Activated naive CD4-positive, alpha-beta T cell treated with anti-CD3 and anti-CD28 coated beads for 36 hours (primary cell): ENCODE measurements at regions of chr2 and their contacts with region 1.

Region 1: GRCh38 chr2:73939419-73939818 is 12.7 kb downstream of the DGUOK start:
- DNase-seq: peak; percentile 76
- H3K4me3 Mint-ChIP-seq: no peak overlapping the region
- H3K27ac Mint-ChIP-seq: peak overlapping the region; percentile 76
- H3K4me1 Mint-ChIP-seq: peaks cover 84% of the 10 kb centered on the region
- H3K27me3 Mint-ChIP-seq: no peaks in the 10 kb centered on the region

Region 2: GRCh38 chr2:73359915-73360697 is 579.3 kb before region 1 on chr2:
- CTCF ChIA-PET with region 1: no interaction called
- intact Hi-C with region 1: no loop called
- DNase-seq: no peak
- H3K4me3 Mint-ChIP-seq: no peak overlapping the region
- H3K27ac Mint-ChIP-seq: no peak overlapping the region
- H3K4me1 Mint-ChIP-seq: no peaks in the 10 kb centered on the region
- H3K27me3 Mint-ChIP-seq: no peaks in the 10 kb centered on the region

Region 3: DNA sequence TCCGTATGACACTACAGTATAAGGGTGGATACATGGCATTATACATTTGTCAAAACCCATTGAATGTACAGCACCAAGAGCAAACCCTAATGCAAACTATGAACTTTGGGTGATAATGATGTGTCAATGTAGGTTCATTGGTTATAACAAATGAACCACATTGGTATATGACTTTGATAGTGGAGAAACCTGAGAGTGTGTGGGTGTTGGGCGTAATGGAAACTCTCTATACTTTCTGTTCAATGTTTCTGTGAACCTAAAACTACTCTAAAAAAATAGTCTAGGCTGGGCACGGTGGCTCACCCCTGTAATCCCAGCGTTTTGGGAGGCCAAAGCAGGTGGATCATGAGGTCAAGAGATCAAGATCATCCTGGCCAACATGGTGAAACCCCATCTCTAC is 53.1 kb before region 1 on chr2:
- CTCF ChIA-PET with region 1: no interaction called
- intact Hi-C with region 1: loop called (anchors 1 kb)
- DNase-seq: peak; percentile 73
- H3K4me3 Mint-ChIP-seq: no peak overlapping the region
- H3K27ac Mint-ChIP-seq: peak overlapping the region; percentile 54
- H3K4me1 Mint-ChIP-seq: peaks cover 24% of the 10 kb centered on the region
- H3K27me3 Mint-ChIP-seq: no peaks in the 10 kb centered on the region

Region 4: DNA sequence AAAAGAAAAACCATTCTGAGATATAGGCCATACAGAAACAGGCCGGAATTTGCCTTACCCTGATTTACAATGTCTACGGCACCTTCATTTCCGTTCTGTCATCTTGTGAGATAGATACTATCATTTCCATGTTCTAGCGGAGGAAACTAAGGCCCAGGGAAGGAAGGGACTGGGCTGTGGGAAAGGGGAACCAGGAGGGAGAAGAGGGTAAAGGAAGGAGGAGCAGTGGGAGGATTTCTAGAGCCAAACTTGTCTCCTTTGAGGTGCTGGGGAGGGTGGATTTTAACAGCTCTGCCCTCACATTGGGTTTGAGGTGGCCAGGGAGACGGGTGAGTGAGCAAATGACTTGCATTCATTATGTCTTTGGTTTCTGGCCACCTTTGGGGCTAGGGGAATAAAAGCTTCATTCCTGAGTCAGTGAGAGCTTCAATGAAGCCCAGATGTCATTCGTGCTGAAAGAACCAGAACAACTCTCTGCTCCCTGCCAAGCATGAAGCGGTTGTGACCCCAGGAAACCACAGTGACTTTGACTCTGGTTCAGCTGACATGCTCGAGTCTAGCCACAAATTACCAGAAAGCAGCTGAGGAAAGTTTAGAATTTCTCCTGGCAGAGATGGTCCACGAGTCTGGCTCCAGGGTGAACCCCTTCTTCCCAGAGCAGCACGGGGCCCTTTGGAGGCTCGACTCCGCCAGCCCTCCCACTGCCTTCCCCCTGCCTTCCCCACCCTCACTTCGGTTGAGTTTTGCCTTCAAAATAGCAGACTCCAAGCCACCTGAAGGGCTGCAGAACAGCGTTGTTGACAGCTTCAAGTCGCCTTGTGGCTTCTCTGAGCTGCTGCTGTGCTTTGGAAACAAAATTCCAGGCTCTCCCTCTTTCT is 42.8 kb before region 1 on chr2:
- CTCF ChIA-PET with region 1: interaction called, 3 read pairs
- intact Hi-C with region 1: loop called (anchors 1 kb)
- DNase-seq: peak; percentile 72
- H3K4me3 Mint-ChIP-seq: peak overlapping the region; percentile 8
- H3K27ac Mint-ChIP-seq: peak overlapping the region; percentile 65
- H3K4me1 Mint-ChIP-seq: peaks cover 33% of the 10 kb centered on the region
- H3K27me3 Mint-ChIP-seq: no peaks in the 10 kb centered on the region

Region 5: DNA sequence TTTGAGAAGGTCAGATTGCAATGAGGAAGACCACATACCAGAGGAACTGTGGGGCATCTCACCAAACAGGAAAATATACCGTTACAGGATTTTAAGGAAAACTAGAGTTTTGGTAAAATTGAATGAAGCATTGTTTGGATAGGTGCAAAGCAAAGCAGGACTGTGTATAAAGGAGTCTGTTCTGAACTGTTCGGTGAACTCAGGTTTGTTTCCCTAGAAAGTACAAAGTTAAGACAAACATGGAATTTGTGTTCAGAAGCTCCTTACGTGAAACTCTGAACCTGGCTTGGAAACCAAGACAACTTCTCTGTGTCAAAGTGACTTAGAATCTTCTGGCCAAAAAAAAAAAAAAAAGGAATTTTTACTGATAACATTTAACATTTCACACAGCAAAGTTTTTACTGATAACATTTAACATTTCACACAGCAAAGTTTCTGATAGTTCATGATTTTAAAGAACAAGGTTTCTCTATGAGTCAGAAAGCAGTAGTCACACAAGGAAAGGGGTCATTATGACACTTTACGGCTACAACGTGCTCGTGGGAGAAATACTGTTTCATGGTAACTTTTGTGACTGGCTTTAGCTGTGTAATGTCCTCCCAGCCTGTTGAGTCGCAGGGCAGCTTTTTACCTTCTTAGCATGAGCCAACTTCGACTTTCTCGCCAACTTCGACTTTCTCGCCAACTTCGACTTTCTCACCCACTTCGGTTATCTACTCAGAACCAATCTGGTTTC is 24.1 kb after region 1 on chr2:
- CTCF ChIA-PET with region 1: interaction called, 3 read pairs
- intact Hi-C with region 1: loop called (anchors 1 kb)
- DNase-seq: peak; percentile 70
- H3K4me3 Mint-ChIP-seq: peak overlapping the region; percentile 38
- H3K27ac Mint-ChIP-seq: peak overlapping the region; percentile 69
- H3K4me1 Mint-ChIP-seq: peaks cover 39% of the 10 kb centered on the region
- H3K27me3 Mint-ChIP-seq: no peaks in the 10 kb centered on the region

Region 6: DNA sequence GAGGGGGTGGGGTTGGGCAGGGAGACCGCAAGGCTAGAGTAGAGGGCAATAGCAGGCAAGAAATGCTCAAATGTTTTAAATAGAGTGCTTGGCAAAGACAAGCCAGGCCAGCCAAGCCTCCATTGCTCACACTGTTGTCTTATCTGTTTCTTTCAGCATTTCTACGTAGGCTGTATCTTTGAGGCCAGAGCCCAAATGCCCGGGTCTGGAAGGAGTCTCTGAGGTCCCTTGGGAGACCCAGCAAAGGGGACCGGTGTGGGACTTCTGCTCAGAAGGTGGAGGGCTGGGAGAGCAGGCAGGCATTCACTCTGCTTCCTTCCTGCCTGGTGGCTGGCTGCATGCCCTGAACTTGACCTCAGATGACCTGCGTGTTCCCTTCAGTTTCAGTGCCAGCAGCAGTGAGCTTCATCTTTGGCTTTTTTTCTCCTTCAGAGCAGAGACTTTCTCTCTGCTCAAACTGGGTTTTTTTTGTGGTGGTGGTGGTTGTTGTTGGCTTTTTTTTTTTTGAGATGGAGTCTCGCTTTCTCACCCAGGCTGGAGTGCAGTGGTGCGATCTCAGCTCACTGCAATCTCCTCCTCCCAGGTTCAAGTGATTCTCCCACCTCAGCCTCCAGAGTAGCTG is 31.5 kb after region 1 on chr2:
- CTCF ChIA-PET with region 1: interaction called, 3 read pairs
- intact Hi-C with region 1: loop called (anchors 1 kb)
- DNase-seq: peak; percentile 76
- H3K4me3 Mint-ChIP-seq: peak overlapping the region; percentile 61
- H3K27ac Mint-ChIP-seq: peak overlapping the region; percentile 79
- H3K4me1 Mint-ChIP-seq: peaks cover 59% of the 10 kb centered on the region
- H3K27me3 Mint-ChIP-seq: no peaks in the 10 kb centered on the region

Region 7: DNA sequence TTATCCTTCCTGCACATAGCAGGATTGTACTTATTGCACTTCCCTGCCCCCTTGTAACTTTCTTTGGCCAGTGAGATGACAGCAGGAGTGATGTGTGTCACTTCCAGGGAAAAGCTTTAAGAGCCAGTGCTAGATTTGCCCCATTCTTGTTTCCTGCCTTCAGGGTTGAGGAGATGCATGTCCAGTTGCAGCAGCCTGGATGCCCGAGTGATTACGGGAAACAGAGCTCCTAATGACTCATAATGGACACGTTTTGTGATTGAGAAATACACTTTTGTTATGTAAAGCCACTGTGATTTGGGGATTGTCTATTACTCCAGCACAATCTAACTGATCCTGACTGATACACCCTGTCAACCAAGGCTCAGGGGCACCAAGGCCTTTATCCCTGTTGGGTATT is 40.3 kb after region 1 on chr2:
- CTCF ChIA-PET with region 1: interaction called, 5 read pairs
- intact Hi-C with region 1: loop called (anchors 1 kb)
- DNase-seq: peak; percentile 32
- H3K4me3 Mint-ChIP-seq: peak overlapping the region; percentile 53
- H3K27ac Mint-ChIP-seq: peak overlapping the region; percentile 88
- H3K4me1 Mint-ChIP-seq: peaks cover 62% of the 10 kb centered on the region
- H3K27me3 Mint-ChIP-seq: no peaks in the 10 kb centered on the region

Region 8: DNA sequence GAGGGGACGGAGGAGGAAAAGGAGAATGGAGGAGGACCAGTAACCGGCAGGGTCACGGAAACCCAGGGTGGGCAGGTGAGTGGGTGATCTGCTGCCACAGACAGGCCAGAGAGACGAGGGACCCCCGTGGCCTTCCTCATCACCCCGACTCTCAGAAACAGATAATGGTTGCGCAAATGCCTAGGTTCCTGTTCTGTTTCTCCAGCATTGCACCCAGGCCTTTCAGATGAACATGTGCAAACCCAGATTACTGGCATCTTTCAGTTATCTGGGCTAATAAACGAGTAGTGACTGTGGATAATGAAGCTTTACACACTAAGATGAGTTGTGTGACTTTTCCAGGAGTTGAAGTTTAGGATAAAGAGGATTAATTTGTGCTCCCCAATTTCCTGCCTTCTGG is 91.8 kb after region 1 on chr2:
- CTCF ChIA-PET with region 1: no interaction called
- intact Hi-C with region 1: loop called (anchors 1 kb)
- DNase-seq: no peak
- H3K4me3 Mint-ChIP-seq: peak overlapping the region; percentile 84
- H3K27ac Mint-ChIP-seq: peak overlapping the region; percentile 99
- H3K4me1 Mint-ChIP-seq: peaks cover 83% of the 10 kb centered on the region
- H3K27me3 Mint-ChIP-seq: no peaks in the 10 kb centered on the region